ENCODE measurements at regions of chr6 and their contacts with region 1.

Region 1: GRCh38 chr6:33299237-33299944 is 649 bp upstream of the RGL2 start:
- DNase-seq: peak; percentile 93 to 95 (median 94)
- ATAC-seq: peak; percentile 80 to 87 (median 82)
- H3K4me3 ChIP-seq: peak overlapping the region; percentile 63 to 100 (median 84)
- H3K27ac ChIP-seq: peak overlapping the region; percentile 88 to 99 (median 98)
- H3K4me1 ChIP-seq: peaks cover 0 to 36% (median 25%) of the 10 kb centered on the region in 12 donors
- H3K27me3 ChIP-seq: no peaks in the 10 kb centered on the region
- CTCF ChIP-seq: peak; percentile 59 to 91 (median 76)
- POLR2A ChIP-seq: peak in 1 of 2 donors; percentile 76

Region 2: GRCh38 chr6:33276864-33277662 is 22.3 kb before region 1 on chr6 and contains the start of gene B3GALT4:
- intact Hi-C with region 1: loop called in 1 of 10 experiments (anchors 1 kb)
- DNase-seq: peak; percentile 81 to 89 (median 81)
- ATAC-seq: peak; percentile 56 to 78 (median 76)
- H3K4me3 ChIP-seq: peak within 1 kb of the TSS; percentile 47 to 87 (median 72)
- H3K27ac ChIP-seq: peak within 1 kb of the TSS; percentile 73 to 98 (median 92)
- H3K4me1 ChIP-seq: peaks cover 11 to 73% (median 50%) of the 10 kb centered on the region in 12 donors
- H3K27me3 ChIP-seq: no peaks in the 10 kb centered on the region
- CTCF ChIP-seq: peak; percentile 32 to 79 (median 59)
- POLR2A ChIP-seq: peak in 1 of 2 donors; percentile 66
- total RNA-seq, gene B3GALT4: 7.3 to 13.8 (median 9.1) TPM

Region 3: DNA sequence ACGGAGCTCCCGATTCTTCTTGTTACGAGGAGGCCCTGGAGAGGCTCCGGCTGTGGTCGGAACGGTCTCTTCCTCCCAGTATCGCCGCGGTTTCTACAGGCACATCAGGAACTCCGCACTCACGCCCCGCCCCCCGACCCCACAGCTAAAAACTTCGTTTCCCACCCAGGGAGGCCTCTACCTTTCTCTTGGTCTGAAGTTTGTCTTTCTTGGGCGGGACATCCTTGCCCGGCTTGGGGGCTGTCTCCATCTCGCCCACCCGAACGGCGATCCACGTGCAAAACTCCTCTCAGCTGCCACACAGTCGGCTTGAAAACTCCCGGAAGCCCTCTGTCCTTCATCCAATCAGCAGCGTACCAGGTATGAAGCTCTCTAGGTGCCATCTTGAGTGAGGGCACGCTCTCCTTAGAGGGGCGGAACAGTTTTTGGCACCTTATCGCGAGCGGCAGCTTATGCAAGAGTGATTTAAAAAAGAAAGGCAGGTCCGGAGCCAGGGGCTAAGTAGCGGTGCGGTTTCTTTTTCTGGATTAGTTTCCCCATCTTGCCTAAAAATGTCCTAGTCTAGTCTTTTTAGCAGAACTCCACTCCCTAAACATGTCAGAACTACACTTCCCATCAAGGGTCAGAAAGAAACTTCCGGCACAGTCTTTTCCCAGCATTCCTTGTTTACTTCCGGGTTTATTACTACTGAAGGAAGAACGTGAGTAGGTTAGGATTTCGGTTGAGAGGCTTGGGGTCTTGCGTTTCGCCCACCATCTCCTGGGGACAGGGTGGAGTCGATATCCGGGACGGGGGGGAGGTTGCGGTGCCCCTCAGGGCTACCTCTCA is 10.3 kb before region 1 on chr6 and contains the starts of genes PFDN6 and WDR46:
- intact Hi-C with region 1: loop called in 2 of 10 experiments (anchors 1 kb)
- DNase-seq: peak; percentile 74 to 87 (median 86)
- ATAC-seq: peak; percentile 92 to 98 (median 95)
- H3K4me3 ChIP-seq: peak within 1 kb of the TSS; percentile 60 to 90 (median 73)
- H3K27ac ChIP-seq: peak within 1 kb of the TSS; percentile 49 to 89 (median 81)
- H3K4me1 ChIP-seq: peaks cover 0 to 25% (median 18%) of the 10 kb centered on the region in 12 donors
- H3K27me3 ChIP-seq: no peaks in the 10 kb centered on the region
- CTCF ChIP-seq: no peak
- POLR2A ChIP-seq: peak in 1 of 2 donors; percentile 32
- total RNA-seq, gene PFDN6: 29.2 to 62.2 (median 43.2) TPM
- total RNA-seq, gene WDR46: 12.2 to 39.5 (median 21.4) TPM

Region 4: DNA sequence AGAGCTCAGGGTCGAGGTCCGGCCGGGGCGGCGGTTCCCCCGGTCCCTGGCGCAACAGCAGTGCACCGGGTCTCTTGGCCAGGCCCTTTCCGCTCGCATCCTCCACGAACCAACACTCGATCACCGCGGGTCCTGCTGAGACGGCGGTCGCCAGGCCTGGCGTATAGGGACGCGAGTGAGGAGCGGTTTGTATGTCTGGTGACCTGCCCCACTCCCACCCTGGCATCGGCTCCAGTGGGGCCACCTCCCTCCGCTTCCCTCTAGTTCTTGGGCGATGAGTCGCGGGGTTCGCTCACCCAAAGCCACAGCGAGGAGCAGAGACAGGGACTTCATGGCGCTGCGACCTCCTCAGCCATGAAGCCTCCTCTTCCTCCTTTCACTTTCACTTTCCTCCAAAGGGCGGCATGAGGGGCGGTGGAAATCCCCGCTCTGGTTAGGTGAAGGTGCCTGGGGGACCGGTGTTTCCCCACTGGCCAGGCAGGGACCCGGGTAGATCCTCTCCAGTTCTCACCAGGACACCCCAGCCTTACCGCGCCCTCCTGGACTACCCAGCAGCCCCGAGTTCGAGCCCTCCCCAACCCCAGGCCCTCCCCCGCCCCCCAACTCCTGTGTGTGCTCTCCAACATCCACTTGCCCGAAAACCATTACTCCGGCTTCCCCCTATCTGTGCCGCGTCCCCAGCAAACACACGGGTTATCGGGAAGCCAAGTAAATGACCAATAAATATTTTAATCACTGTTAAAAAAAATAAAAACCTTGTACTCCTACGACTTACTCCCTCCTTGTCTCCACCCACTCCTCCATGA is 14.5 kb after region 1 on chr6 and contains the start of gene TAPBP:
- intact Hi-C with region 1: loop called in 2 of 10 experiments (anchors 2 kb)
- DNase-seq: peak; percentile 62 to 77 (median 71)
- ATAC-seq: peak; percentile 7 to 50 (median 16)
- H3K4me3 ChIP-seq: peak within 1 kb of the TSS; percentile 64 to 99 (median 93)
- H3K27ac ChIP-seq: peak within 1 kb of the TSS; percentile 85 to 99 (median 97)
- H3K4me1 ChIP-seq: peaks cover 0 to 72% (median 39%) of the 10 kb centered on the region in 12 donors
- H3K27me3 ChIP-seq: no peaks in the 10 kb centered on the region
- CTCF ChIP-seq: no peak
- POLR2A ChIP-seq: peak in 1 of 2 donors; percentile 34
- total RNA-seq, gene TAPBP: 51.6 to 248 (median 107) TPM

Region 5: DNA sequence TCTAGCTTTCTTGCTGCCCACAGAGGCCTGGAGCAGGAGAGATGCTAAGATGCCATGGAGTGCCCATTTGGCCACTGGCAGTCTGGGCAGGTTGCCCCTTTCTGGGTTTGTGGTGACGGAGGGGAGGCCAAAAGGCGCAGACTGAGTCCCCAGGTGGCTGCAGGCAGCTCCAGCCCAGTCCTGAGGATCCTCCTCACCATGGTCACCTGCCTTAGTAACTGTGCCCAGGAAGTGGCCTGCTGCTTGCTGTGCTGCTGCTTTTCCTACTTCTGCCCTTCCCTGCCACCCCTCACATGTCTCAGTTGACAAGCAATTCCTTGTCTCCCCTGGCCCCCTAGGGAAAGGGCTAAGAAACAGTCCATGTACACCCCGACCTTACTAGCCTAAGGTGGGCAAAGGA is 56.9 kb after region 1 on chr6:
- intact Hi-C with region 1: no loop called
- DNase-seq: no peak
- ATAC-seq: no peak
- H3K4me3 ChIP-seq: no peak overlapping the region
- H3K27ac ChIP-seq: no peak overlapping the region
- H3K4me1 ChIP-seq: no peaks in the 10 kb centered on the region
- H3K27me3 ChIP-seq: peaks cover 0 to 6% (median 0%) of the 10 kb centered on the region in 9 donors
- CTCF ChIP-seq: no peak
- POLR2A ChIP-seq: no peak